CD8-positive, alpha-beta T cell (primary cell): ENCODE measurements at regions of chr2 and their contacts with region 1.

Region 1: DNA sequence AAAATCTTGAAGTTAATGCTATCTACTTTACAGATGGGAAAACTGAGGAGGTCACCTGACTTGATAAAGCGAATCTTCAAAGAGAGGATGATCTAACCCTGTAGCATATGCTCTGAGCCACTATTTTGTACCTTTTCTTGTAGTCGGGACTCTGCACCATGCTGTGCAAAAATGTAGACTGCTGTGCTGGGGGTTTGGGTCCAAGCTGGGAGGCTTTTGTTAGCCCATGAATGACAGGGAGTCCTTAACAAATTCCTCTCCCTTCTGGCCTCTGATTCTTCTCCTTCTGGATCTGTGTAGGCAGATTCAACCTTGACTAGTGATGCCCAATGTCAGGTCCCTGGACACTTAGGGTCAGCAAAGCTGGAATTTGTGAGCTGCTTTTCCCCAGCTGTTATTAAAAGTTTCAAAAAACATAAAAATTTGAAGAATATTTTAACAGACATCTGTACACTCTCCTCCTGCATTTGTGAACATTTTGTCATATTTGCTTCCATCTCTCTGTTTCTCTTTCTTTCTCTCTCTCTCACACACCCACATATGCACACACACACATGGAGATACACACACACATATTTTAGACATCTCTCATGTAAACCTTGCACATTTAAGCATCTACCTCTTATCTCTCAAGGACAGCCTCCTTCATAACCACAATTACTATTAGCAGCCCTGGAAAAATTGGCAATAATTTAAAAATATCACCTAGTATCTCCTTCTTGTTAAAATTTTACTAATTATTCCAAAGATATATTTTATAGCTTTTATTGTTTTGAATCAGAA is 335.0 kb upstream of the TRIB2 start:
- DNase-seq: no peak
- ATAC-seq: no peak
- H3K4me3 ChIP-seq: no peak overlapping the region
- H3K4me3 Mint-ChIP-seq: no peak overlapping the region
- H3K27ac ChIP-seq: no peak overlapping the region
- H3K27ac Mint-ChIP-seq: no peak overlapping the region
- H3K4me1 ChIP-seq: no peaks in the 10 kb centered on the region
- H3K4me1 Mint-ChIP-seq: no peaks in the 10 kb centered on the region
- H3K27me3 ChIP-seq: no peaks in the 10 kb centered on the region
- H3K27me3 Mint-ChIP-seq: no peaks in the 10 kb centered on the region
- CTCF ChIP-seq: no peak

Region 2: GRCh38 chr2:11270891-11271290 is 1110.8 kb before region 1 on chr2:
- CTCF ChIA-PET with region 1: no interaction called
- POLR2A ChIA-PET with region 1: no interaction called
- intact Hi-C with region 1: no loop called
- DNase-seq: no peak
- ATAC-seq: no peak
- H3K4me3 ChIP-seq: no peak overlapping the region
- H3K4me3 Mint-ChIP-seq: no peak overlapping the region
- H3K27ac ChIP-seq: no peak overlapping the region
- H3K27ac Mint-ChIP-seq: no peak overlapping the region
- H3K4me1 ChIP-seq: no peaks in the 10 kb centered on the region
- H3K4me1 Mint-ChIP-seq: peaks cover 9% of the 10 kb centered on the region
- H3K27me3 ChIP-seq: no peaks in the 10 kb centered on the region
- H3K27me3 Mint-ChIP-seq: no peaks in the 10 kb centered on the region
- CTCF ChIP-seq: no peak

Region 3: DNA sequence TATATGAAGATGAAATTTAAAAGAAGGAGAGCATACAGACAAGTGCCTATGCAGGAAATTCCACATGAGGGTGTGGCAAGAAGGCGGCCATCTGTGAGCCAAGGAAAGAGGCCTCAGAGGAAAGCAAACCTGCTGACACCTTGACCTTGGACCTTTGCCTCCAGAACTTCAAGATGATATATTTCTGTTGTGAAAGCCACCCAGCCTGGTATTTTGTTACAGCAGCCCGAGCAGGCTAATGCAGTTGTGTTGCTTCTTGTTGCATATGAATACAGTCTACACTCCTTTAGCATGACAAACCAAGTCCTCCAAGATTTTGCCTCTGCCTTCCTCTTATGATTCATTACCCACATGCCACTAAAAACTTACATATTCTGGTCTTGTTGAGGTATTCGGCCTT is 39.8 kb before region 1 on chr2:
- CTCF ChIA-PET with region 1: no interaction called
- POLR2A ChIA-PET with region 1: no interaction called
- intact Hi-C with region 1: loop called in 1 of 2 experiments (anchors 1 kb)
- DNase-seq: no peak
- ATAC-seq: no peak
- H3K4me3 ChIP-seq: no peak overlapping the region
- H3K4me3 Mint-ChIP-seq: no peak overlapping the region
- H3K27ac ChIP-seq: no peak overlapping the region
- H3K27ac Mint-ChIP-seq: no peak overlapping the region
- H3K4me1 ChIP-seq: no peaks in the 10 kb centered on the region
- H3K4me1 Mint-ChIP-seq: no peaks in the 10 kb centered on the region
- H3K27me3 ChIP-seq: no peaks in the 10 kb centered on the region
- H3K27me3 Mint-ChIP-seq: no peaks in the 10 kb centered on the region
- CTCF ChIP-seq: no peak

Region 4: GRCh38 chr2:12847694-12848575 is 466.2 kb after region 1 on chr2:
- CTCF ChIA-PET with region 1: no interaction called
- POLR2A ChIA-PET with region 1: no interaction called
- intact Hi-C with region 1: no loop called
- DNase-seq: no peak
- ATAC-seq: no peak
- H3K4me3 ChIP-seq: no peak overlapping the region
- H3K4me3 Mint-ChIP-seq: no peak overlapping the region
- H3K27ac ChIP-seq: no peak overlapping the region
- H3K27ac Mint-ChIP-seq: no peak overlapping the region
- H3K4me1 ChIP-seq: no peaks in the 10 kb centered on the region
- H3K4me1 Mint-ChIP-seq: no peaks in the 10 kb centered on the region
- H3K27me3 ChIP-seq: no peaks in the 10 kb centered on the region
- H3K27me3 Mint-ChIP-seq: peaks cover 13% of the 10 kb centered on the region
- CTCF ChIP-seq: no peak

Region 5: GRCh38 chr2:13102397-13103063 is 720.8 kb after region 1 on chr2:
- CTCF ChIA-PET with region 1: no interaction called
- POLR2A ChIA-PET with region 1: no interaction called
- intact Hi-C with region 1: no loop called
- DNase-seq: no peak
- ATAC-seq: no peak
- H3K4me3 ChIP-seq: no peak overlapping the region
- H3K4me3 Mint-ChIP-seq: no peak overlapping the region
- H3K27ac ChIP-seq: no peak overlapping the region
- H3K27ac Mint-ChIP-seq: no peak overlapping the region
- H3K4me1 ChIP-seq: no peaks in the 10 kb centered on the region
- H3K4me1 Mint-ChIP-seq: no peaks in the 10 kb centered on the region
- H3K27me3 ChIP-seq: no peaks in the 10 kb centered on the region
- H3K27me3 Mint-ChIP-seq: peaks cover 16% of the 10 kb centered on the region
- CTCF ChIP-seq: no peak